CD4-positive, alpha-beta memory T cell (primary cell): ENCODE measurements at regions of chr3 and their contacts with region 1.

Region 1: GRCh38 chr3:49867871-49868321 is 1.8 kb downstream of the CAMKV start:
- DNase-seq: no peak
- H3K4me3 ChIP-seq: no peak overlapping the region
- H3K4me3 Mint-ChIP-seq: peak overlapping the region in 6 of 8 donors; percentile 21 to 66 (median 53)
- H3K27ac ChIP-seq: no peak overlapping the region
- H3K27ac Mint-ChIP-seq: peak overlapping the region in 1 of 7 donors; percentile 29
- H3K4me1 ChIP-seq: peaks cover 17% of the 10 kb centered on the region
- H3K4me1 Mint-ChIP-seq: peaks cover under 1 to 21% (median 7%) of the 10 kb centered on the region in 4 donors
- H3K27me3 ChIP-seq: peaks cover 23% of the 10 kb centered on the region
- H3K27me3 Mint-ChIP-seq: peaks cover 17 to 19% of the 10 kb centered on the region in 2 donors

Region 2: DNA sequence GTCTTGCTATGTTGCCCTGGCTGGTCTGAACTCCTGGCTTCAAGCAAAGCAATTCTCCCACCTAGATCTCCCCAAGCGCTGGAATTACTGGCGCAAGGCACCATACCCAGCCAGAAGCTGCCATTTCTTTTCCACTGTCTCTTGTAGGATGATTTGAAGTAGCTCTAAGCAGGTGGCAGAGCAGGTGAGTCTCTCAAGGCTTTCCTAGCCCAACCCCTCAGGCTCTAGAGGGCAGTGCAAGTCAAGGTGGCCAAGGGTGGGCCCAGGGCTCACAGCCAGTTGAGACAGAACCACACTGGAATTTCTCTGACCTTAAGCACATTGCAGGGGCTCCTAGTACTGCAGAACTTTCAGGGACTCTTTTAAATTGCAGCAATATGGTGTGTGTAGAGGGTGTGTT is 413.4 kb before region 1 on chr3:
- CTCF ChIA-PET with region 1: no interaction called
- POLR2A ChIA-PET with region 1: no interaction called
- intact Hi-C with region 1: no loop called
- DNase-seq: no peak
- H3K4me3 ChIP-seq: no peak overlapping the region
- H3K4me3 Mint-ChIP-seq: no peak overlapping the region
- H3K27ac ChIP-seq: no peak overlapping the region
- H3K27ac Mint-ChIP-seq: peak overlapping the region in 2 of 7 donors; percentile 19 to 60
- H3K4me1 ChIP-seq: no peaks in the 10 kb centered on the region
- H3K4me1 Mint-ChIP-seq: no peaks in the 10 kb centered on the region
- H3K27me3 ChIP-seq: no peaks in the 10 kb centered on the region
- H3K27me3 Mint-ChIP-seq: peaks cover 0 to 3% of the 10 kb centered on the region in 2 donors

Region 3: DNA sequence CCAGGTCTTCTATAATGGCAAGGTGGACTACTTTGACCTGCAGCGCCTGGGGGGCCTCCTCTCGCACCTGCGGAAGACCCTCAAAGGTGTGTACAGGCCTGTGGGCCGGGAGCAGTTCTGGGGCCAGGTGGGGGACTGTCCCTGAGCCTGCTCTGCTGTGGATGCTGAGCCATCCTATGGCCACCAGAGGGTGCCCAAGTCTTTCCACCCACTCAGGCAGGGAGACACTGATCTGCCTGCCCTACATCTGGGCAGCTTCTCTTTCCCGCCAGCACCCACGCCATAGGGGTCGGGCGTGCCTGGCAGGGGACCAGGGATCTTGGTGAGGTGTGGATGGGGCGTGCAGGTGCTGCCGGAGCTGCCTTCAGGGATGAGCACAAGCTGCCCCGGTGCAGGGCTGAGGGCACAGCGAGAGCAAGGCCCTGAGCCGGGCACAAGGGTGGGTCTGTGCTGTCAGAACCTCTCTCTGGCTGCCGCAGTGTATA is 164.4 kb before region 1 on chr3:
- CTCF ChIA-PET with region 1: no interaction called
- POLR2A ChIA-PET with region 1: no interaction called
- intact Hi-C with region 1: no loop called
- DNase-seq: peak; percentile 66 to 72 (median 68)
- H3K4me3 ChIP-seq: no peak overlapping the region
- H3K4me3 Mint-ChIP-seq: no peak overlapping the region
- H3K27ac ChIP-seq: no peak overlapping the region
- H3K27ac Mint-ChIP-seq: peak overlapping the region in 4 of 7 donors; percentile 41 to 75 (median 66)
- H3K4me1 ChIP-seq: no peaks in the 10 kb centered on the region
- H3K4me1 Mint-ChIP-seq: peaks cover 0 to 9% (median 5%) of the 10 kb centered on the region in 4 donors
- H3K27me3 ChIP-seq: no peaks in the 10 kb centered on the region
- H3K27me3 Mint-ChIP-seq: no peaks in the 10 kb centered on the region

Region 4: GRCh38 chr3:49831341-49831740 is 36.6 kb before region 1 on chr3:
- CTCF ChIA-PET with region 1: no interaction called
- POLR2A ChIA-PET with region 1: no interaction called
- intact Hi-C with region 1: no loop called
- DNase-seq: no peak
- H3K4me3 ChIP-seq: no peak overlapping the region
- H3K4me3 Mint-ChIP-seq: no peak overlapping the region
- H3K27ac ChIP-seq: no peak overlapping the region
- H3K27ac Mint-ChIP-seq: no peak overlapping the region
- H3K4me1 ChIP-seq: no peaks in the 10 kb centered on the region
- H3K4me1 Mint-ChIP-seq: no peaks in the 10 kb centered on the region
- H3K27me3 ChIP-seq: no peaks in the 10 kb centered on the region
- H3K27me3 Mint-ChIP-seq: no peaks in the 10 kb centered on the region

Region 5: DNA sequence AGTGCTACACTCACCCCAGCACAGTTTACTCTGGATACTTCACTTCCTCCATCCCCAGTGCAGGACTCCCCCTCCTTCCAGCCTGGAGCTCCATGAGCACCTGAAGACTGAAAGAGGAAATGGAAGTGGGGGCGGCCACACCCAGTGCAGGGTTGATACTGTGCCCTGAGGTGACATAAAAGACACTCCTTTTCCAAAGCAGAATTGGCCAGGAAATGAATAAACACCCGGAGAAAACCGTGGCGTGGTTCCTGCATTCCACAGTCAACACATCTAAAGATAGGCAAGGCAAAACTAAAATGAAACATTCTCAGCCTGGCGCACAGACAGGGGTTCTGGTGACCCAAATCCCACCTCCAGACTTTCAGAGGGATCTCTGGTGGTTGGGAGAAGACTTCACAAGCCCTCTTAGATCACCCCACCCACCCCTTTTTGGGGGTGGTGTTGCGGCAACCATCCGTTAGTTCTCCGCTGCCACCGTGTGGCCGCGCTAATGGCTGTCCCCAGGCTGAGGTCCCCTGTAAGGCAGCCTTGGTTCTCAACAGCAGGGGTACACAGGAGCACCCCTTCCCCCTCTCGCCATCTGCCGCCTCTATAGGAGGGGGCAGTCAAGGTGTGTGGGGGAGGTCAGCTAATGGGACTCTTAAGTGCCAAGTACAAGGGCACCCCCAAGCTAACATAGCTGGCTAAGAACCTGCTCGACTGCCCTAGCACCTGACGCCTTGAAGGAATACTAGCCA is 38.3 kb after region 1 on chr3:
- CTCF ChIA-PET with region 1: no interaction called
- POLR2A ChIA-PET with region 1: no interaction called
- intact Hi-C with region 1: loop called (anchors 2 kb)
- DNase-seq: peak; percentile 39 to 64 (median 41)
- H3K4me3 ChIP-seq: peak overlapping the region in 1 of 2 donors; percentile 4
- H3K4me3 Mint-ChIP-seq: peak overlapping the region; percentile 48 to 82 (median 62)
- H3K27ac ChIP-seq: peak overlapping the region; percentile 40
- H3K27ac Mint-ChIP-seq: peak overlapping the region; percentile 77 to 92 (median 87)
- H3K4me1 ChIP-seq: peaks cover 35% of the 10 kb centered on the region
- H3K4me1 Mint-ChIP-seq: peaks cover 15 to 36% (median 25%) of the 10 kb centered on the region in 4 donors
- H3K27me3 ChIP-seq: no peaks in the 10 kb centered on the region
- H3K27me3 Mint-ChIP-seq: no peaks in the 10 kb centered on the region